HEK293 (cell line): ENCODE measurements at regions of chr6 and their contacts with region 1.

Region 1: DNA sequence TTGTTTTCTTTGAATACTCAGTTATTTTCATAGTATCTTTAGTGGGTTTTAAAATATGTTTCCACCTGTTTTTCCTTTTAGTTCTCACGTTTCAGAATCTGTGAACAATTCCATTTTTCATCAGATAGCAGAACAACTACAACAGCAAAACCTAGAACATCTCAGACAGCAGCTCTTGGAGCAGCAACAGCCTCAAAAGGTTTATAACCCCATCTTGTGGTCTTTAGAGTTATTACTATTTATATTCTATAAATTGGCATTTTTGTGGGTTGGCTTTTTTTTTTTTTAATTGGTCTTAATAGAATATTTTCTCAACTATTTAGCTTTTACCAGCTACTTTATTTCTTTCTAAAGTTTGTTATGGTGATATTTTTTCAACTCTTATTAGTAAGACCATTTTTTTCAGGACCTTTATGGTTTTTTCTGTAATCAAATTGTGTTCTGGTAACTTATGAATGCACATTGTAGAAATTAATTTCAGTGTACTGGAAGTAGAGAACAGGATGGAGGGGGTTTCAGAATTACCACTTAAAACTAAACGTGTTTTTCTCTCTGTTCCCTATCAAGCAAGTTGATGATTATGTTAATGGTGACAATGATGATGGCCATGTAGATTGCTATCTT is 72.2 kb downstream of the SCAF8 start:
- H3K4me3 ChIP-seq: no peak overlapping the region
- H3K27ac ChIP-seq: no peak overlapping the region
- H3K4me1 ChIP-seq: no peaks in the 10 kb centered on the region
- CTCF ChIP-seq: 0 out of 2 replicates have a peak, but pooled peaks have one; percentile 22

Region 2: DNA sequence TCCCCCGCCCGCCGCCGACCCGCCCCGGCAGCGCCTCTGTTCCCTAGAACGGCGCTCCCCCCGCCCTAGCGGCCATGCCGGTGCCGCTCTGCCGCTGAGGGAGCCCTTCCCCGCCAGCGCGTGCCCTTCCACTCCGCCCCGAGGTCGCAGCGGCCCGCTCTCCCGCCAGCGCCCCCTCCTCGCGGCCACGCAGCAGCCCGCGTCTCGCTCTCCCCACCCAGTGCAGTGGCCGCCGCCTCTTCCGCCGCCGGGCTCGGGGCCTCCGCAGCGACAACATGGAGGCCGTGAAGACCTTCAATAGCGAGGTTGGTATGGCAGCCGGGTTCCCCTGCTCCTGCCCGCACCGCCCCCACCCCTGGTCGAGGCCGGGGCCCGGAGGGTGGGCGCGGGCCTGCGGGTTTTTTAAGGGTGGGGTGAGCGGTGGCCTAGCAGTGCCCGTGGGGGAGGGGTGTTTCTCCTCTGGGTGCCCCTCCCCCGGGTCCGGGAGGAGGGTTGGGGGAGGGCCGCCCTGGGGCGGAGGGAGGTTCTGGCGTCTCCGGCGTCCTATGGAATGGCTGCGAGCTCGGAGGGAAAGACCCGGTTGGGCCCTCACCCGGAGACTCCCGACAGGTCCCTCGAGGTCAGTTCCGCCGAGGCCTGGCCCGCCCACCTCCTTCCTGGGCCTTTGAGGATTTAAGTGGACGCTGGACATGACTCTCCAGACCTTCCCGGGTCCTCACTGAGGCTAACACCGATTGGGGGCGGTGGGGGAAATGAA is 71.6 kb before region 1 on chr6:
- CTCF ChIA-PET with region 1: interaction called, 10 read pairs
- POLR2A ChIA-PET with region 1: interaction called, 5 read pairs
- H3K4me3 ChIP-seq: peak overlapping the region; percentile 94
- H3K27ac ChIP-seq: peak overlapping the region; percentile 98
- H3K4me1 ChIP-seq: peaks cover 13% of the 10 kb centered on the region
- CTCF ChIP-seq: no peak; the same call in 1 of the 2 replicates